A673 (cell line): ENCODE measurements at regions of chr11 and their contacts with region 1.

Region 1: DNA sequence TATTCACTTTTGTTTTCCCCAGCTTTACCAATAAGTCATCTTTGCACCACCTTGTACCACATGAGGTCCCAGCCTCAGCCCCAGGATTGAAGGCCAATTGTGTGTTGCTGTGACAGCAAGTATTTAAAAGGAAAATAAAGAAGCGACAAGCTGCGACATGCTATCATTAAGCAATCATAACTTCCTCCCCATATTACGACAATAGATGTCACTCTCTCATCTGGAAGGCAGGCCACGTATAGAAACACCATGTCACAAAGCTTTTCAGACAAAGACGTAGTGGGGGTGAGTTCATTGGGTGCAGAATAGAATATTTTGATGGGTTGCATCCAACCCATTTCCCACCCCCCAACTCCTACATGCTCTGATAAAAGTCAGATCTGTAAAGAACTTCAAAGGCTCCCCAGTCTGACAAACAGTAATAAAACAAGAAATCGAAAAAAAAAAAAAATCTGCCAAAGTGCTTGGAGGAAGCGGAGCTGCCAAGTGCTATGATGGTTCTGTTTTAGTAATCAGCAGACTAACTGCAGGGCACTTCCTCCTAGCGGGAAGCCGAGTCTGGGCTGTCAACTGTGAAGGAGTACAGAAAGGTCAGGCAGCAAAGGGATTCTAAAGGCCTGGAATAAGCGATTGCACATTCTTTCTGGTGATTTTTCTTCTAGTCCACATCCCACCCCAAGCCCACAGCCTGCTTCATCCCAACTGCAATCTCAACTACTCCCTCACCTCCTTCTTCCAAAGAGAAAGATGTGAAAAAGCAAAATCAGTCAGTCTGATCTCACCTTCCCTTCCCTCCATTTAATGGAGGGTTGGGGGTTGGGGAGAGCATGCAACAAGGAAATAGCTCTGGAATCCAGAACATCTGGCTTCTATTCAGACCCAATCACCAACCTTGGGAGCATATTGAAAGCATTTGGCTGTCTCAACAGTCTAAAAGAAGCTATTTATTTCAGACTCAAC is 131.4 kb upstream of the UBASH3B start:
- DNase-seq: peak; percentile 97
- H3K4me3 ChIP-seq: peak overlapping the region; percentile 10
- H3K27ac ChIP-seq: peak overlapping the region; percentile 77
- H3K4me1 ChIP-seq: peaks cover 43% of the 10 kb centered on the region
- H3K27me3 ChIP-seq: no peaks in the 10 kb centered on the region
- CTCF ChIP-seq: no peak

Region 2: DNA sequence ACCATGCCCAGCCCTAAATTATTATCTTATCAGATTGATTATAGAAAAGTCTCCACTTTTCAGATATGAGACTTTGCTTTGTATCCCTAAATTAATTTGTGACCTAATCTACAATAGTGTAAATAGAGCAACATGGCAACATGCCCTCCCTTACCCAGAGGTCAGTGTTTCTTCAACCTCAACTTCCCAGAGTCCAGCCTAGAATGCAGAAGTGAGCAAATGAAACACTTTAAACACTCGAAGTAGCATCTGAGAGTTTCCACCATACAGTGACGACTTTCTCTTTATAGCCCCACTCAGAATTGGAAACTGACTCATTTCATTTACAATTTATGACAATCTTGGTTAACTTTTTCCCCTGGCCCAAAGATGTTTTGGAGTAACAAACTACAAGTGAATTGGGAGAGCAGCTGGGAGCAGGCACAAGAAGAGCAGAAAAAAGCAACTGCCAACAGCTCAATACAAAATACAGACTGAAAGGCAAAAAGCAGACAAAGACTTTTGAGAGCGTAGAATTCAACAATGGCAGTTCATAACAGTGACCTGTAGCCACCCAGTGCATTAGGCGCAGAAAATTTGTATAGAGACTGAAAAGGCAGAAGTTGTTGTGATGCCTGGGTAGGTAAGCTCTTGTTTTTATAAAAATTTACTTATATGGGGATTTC is 398.0 kb before region 1 on chr11:
- CTCF ChIA-PET with region 1: no interaction called
- POLR2A ChIA-PET with region 1: no interaction called
- intact Hi-C with region 1: no loop called
- DNase-seq: no peak
- H3K4me3 ChIP-seq: no peak overlapping the region
- H3K27ac ChIP-seq: no peak overlapping the region
- H3K4me1 ChIP-seq: peaks cover 2% of the 10 kb centered on the region
- H3K27me3 ChIP-seq: no peaks in the 10 kb centered on the region
- CTCF ChIP-seq: no peak

Region 3: DNA sequence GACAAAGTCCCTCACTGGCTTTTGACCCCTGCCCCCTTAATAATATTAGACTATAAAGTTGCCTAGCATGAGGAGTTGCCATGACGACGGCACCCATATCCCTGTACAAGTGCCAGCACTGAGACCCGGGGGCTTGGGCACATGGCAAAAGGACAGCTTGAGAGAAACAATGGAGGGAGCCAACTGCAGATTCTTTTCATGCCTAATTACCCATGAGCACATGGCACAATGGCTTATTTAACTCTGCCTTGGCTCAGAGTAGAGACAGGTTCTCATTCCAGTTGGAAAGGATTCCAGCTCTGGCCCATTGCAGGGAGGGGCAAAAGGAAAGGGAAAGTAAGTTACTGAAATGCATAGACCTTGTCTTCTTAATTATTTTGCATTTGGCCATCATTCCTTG is 129.8 kb before region 1 on chr11:
- CTCF ChIA-PET with region 1: no interaction called
- POLR2A ChIA-PET with region 1: no interaction called
- intact Hi-C with region 1: no loop called
- DNase-seq: no peak
- H3K4me3 ChIP-seq: no peak overlapping the region
- H3K27ac ChIP-seq: no peak overlapping the region
- H3K4me1 ChIP-seq: no peaks in the 10 kb centered on the region
- H3K27me3 ChIP-seq: no peaks in the 10 kb centered on the region
- CTCF ChIP-seq: no peak

Region 4: GRCh38 chr11:122578168-122578825 is 54.2 kb after region 1 on chr11:
- CTCF ChIA-PET with region 1: no interaction called
- POLR2A ChIA-PET with region 1: no interaction called
- intact Hi-C with region 1: loop called (anchors 2 kb)
- DNase-seq: peak; percentile 58
- H3K4me3 ChIP-seq: no peak overlapping the region
- H3K27ac ChIP-seq: no peak overlapping the region
- H3K4me1 ChIP-seq: no peaks in the 10 kb centered on the region
- H3K27me3 ChIP-seq: no peaks in the 10 kb centered on the region
- CTCF ChIP-seq: peak; percentile 63